ENCODE measurements at regions of chr17 and their contacts with region 1.

Region 1: GRCh38 chr17:39547713-39548478 is 59.8 kb downstream of the NEUROD2 start:
- DNase-seq: peak; percentile 93
- H3K4me3 Mint-ChIP-seq: no peak overlapping the region
- H3K27ac Mint-ChIP-seq: no peak overlapping the region
- H3K4me1 Mint-ChIP-seq: no peaks in the 10 kb centered on the region
- H3K27me3 Mint-ChIP-seq: no peaks in the 10 kb centered on the region

Region 2: DNA sequence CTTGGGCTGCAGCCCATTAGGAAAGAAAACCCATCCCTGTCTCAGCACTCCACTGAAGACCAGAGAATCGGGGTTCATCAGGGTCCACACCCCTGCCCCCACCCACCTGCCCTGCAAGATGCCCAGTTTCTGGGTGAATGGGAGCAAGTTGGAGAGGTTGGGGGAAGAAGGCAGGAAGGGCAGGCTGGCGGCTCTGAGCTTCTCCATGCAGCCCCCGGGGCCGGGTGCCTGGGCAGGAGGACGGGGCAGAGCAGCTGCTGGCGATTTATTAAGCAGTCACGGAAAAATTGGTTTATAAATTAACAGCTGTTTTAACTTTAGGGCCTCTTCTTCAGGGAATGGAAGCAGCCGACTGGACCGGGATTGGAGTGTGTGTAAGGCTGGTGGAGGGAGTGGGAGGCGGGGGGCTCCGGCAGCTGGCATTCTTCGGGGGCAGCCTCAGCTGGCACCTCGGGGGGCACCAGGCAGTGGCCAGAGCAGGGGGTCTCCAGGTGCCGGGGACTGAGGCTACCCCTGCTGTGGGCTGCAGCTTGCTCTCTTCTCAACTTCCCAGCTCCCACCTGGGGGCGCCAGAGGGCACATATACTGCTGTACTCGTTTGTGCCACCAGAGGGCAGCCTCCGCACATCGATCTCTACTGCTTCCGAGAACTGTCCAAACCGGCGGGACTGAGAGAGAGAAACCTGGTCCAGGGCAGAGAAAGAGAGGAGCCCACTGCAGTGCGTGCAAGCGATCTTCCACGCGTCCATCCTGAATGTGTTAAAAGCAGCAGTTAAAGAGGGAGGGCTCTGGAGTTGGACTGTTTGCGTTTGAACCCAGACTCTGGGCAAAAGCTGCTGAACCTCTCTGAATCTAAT is 73.9 kb after region 1 on chr17:
- intact Hi-C with region 1: loop called (anchors 1 kb)
- DNase-seq: peak; percentile 97
- H3K4me3 Mint-ChIP-seq: peak overlapping the region; percentile 76
- H3K27ac Mint-ChIP-seq: peak overlapping the region; percentile 62
- H3K4me1 Mint-ChIP-seq: peaks cover 17% of the 10 kb centered on the region
- H3K27me3 Mint-ChIP-seq: peaks cover 57% of the 10 kb centered on the region